ENCODE measurements at regions of chr12 and their contacts with region 1.

Region 1: DNA sequence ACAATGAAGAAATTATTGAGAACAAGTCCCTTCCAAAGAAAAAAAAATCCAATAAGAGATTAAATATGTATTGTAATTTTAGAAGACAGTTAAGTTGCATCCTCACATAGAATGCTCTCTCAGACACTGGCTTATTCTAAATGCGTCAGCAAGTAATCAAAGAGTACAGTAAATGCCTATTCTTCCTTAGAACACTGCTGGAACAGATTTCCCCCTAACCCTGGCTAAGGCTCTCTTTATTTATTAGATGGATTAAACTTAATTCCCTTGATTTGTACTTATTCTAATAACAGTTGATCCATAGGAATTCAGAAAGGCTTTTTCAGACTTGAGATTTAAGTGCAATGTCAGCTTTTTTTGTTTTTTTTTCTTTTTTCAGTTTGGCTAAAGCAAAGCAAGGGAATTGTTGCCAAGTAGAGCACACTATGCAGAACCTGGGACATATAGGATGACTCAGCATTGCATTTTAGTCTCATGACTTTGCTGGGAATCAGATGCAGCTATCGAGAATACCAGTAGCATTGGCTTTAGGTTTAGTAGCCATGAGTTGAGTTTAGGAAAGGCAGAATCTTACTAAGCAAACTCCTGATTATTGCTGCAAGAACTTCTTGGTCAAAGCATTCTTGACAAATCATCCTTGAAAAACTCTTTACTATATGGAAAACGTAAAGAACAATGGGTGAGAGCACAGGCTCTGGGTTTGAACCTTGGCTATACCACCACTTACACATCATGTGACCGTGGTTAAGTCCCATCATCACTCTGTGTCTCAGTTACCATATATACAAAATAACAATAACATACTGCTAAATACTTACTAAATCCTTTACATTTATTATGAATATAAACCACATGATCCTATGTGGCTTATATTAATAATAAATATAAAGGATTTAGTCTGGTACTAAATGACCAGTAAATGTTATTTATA is 26.7 kb downstream of the MED21 start:
- DNase-seq: peak; percentile 74
- H3K4me3 ChIP-seq: no peak overlapping the region
- H3K27ac ChIP-seq: peak overlapping the region; percentile 73
- H3K4me1 ChIP-seq: peaks cover 18% of the 10 kb centered on the region
- H3K27me3 ChIP-seq: no peaks in the 10 kb centered on the region
- CTCF ChIP-seq: no peak

Region 2: GRCh38 chr12:27081668-27082111 is 32.6 kb after region 1 on chr12:
- CTCF ChIA-PET with region 1: no interaction called
- dilution Hi-C with region 1: no loop called
- in situ Hi-C with region 1: no loop called
- intact Hi-C with region 1: loop called (anchors 2 kb)
- DNase-seq: peak; percentile 96
- H3K4me3 ChIP-seq: no peak overlapping the region
- H3K27ac ChIP-seq: peak overlapping the region; percentile 100
- H3K4me1 ChIP-seq: peaks cover 56% of the 10 kb centered on the region
- H3K27me3 ChIP-seq: no peaks in the 10 kb centered on the region
- CTCF ChIP-seq: peak; percentile 26 to 55

Measured in mammary epithelial cell (primary cell).